ENCODE measurements at regions of chr1 and their contacts with region 1.

Region 1: DNA sequence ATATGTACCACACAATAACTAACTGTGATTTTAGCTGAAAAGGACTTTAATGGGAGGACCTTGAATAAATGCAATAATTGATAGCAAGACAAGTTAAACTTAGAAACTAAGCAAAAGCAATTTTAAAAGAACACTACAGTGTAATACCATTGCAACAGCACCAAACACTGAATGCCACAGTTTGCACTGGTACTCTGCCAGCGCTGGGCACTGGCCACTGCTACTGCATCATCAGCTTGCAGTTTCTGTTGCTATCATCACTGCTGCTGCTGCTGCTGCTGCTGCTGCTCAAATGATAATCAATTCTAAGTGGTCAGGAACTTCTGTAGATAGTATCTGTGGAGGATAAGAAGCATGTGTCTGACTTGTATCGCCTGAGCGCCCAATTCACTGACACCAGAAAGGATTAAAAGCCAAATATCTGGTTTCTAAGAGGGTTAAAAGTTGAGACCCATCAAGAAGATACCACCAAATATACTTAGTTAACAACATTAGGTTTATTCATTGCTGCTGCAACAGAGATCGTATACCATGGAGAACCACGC is 306.9 kb downstream of the LRRC40 start:
- DNase-seq: no peak
- ATAC-seq: no peak
- H3K4me3 ChIP-seq: no peak overlapping the region
- H3K4me3 Mint-ChIP-seq: no peak overlapping the region
- H3K27ac ChIP-seq: no peak overlapping the region
- H3K27ac Mint-ChIP-seq: no peak overlapping the region
- H3K4me1 ChIP-seq: no peaks in the 10 kb centered on the region
- H3K4me1 Mint-ChIP-seq: no peaks in the 10 kb centered on the region
- H3K27me3 ChIP-seq: no peaks in the 10 kb centered on the region
- H3K27me3 Mint-ChIP-seq: no peaks in the 10 kb centered on the region
- CTCF ChIP-seq: no peak

Region 2: GRCh38 chr1:69814926-69815325 is 83.5 kb before region 1 on chr1:
- CTCF ChIA-PET with region 1: no interaction called
- POLR2A ChIA-PET with region 1: no interaction called
- intact Hi-C with region 1: loop called in 1 of 2 experiments (anchors 2 kb)
- DNase-seq: no peak
- ATAC-seq: no peak
- H3K4me3 ChIP-seq: no peak overlapping the region
- H3K4me3 Mint-ChIP-seq: no peak overlapping the region
- H3K27ac ChIP-seq: no peak overlapping the region
- H3K27ac Mint-ChIP-seq: no peak overlapping the region
- H3K4me1 ChIP-seq: no peaks in the 10 kb centered on the region
- H3K4me1 Mint-ChIP-seq: no peaks in the 10 kb centered on the region
- H3K27me3 ChIP-seq: no peaks in the 10 kb centered on the region
- H3K27me3 Mint-ChIP-seq: no peaks in the 10 kb centered on the region
- CTCF ChIP-seq: no peak

Region 3: GRCh38 chr1:70552662-70553566 is 654.4 kb after region 1 on chr1:
- CTCF ChIA-PET with region 1: no interaction called
- POLR2A ChIA-PET with region 1: no interaction called
- intact Hi-C with region 1: no loop called
- DNase-seq: no peak
- ATAC-seq: no peak
- H3K4me3 ChIP-seq: no peak overlapping the region
- H3K4me3 Mint-ChIP-seq: no peak overlapping the region
- H3K27ac ChIP-seq: no peak overlapping the region
- H3K27ac Mint-ChIP-seq: no peak overlapping the region
- H3K4me1 ChIP-seq: no peaks in the 10 kb centered on the region
- H3K4me1 Mint-ChIP-seq: no peaks in the 10 kb centered on the region
- H3K27me3 ChIP-seq: no peaks in the 10 kb centered on the region
- H3K27me3 Mint-ChIP-seq: no peaks in the 10 kb centered on the region
- CTCF ChIP-seq: no peak